Activated CD4-positive, alpha-beta memory T cell treated with anti-CD3 and anti-CD28 coated beads for 36 hours (primary cell): ENCODE measurements at regions of chrX and their contacts with region 1.

Region 1: DNA sequence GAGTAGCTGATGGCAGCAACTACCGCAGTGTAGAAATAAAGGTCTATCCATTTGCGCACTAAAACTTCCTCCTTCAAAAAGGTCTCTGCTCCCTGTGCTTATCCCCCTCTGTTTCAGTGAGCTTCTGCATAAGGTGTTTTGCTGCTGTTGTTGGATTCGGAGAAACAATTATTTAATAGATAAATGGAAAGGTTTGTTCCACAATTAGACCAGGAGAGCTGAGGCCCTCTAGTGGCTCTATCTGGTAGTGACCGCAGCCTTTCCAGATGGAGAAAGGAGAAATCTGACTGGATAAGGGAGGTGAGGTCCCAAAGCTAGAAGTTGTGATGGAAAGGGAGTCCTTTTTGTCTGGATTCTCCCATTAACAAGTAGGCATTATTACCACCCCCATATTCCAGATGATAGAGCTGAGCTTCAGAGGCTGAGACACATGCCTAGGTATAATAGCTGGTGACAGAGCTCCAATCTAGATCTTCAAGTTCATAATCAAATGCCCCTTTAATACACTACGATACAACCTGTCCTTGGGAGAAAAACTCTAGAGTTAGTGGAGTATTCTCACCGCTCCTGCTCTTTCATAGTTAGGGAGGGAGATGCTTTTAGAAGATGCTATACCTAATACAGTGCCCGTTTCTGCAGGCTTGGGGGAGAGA is 5.1 kb upstream of the GABRQ start:
- DNase-seq: peak; percentile 50
- H3K4me3 Mint-ChIP-seq: no peak overlapping the region
- H3K27ac Mint-ChIP-seq: no peak overlapping the region
- H3K4me1 Mint-ChIP-seq: no peaks in the 10 kb centered on the region
- H3K27me3 Mint-ChIP-seq: peaks cover 6% of the 10 kb centered on the region

Region 2: DNA sequence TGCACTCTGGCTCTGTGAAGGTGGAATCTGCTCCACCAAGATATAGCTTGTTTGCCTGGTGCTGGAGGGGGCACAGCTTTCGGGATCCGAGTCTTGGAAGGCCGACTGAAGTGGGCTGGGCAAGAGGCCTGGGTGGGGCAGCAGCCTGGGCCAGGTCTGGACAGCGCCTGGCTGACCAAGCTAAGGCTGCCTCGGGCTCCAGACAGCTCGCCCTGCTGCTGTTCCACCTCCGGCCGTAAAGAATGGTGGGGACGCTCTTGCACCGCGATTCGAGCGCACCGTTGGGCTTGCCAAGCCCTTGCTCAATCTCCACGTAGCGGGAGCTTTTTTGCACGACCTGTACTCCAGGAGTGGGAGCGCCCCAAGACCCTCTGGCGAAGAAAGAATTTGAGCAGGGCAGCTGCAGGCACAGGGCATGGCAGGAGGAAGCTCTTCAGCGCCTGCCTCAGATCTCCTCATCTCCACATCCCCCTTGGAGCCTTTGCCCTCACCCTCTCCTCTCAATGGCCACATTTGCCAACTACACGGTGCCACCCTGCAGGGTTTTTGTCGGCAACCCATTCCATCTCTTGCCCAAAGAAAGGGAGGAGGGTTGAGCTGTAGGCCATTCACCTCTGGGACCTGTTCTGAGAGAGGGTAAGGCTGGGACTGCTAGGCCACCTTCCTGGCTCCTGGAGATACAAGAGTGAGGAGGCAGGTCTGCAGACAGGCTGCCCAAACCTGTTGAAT is 879.1 kb before region 1 on chrX:
- CTCF ChIA-PET with region 1: interaction called, 5 read pairs
- POLR2A ChIA-PET with region 1: no interaction called
- intact Hi-C with region 1: loop called (anchors 5 kb)
- DNase-seq: peak; percentile 25
- H3K4me3 Mint-ChIP-seq: no peak overlapping the region
- H3K27ac Mint-ChIP-seq: no peak overlapping the region
- H3K4me1 Mint-ChIP-seq: no peaks in the 10 kb centered on the region
- H3K27me3 Mint-ChIP-seq: peaks cover 8% of the 10 kb centered on the region

Region 3: DNA sequence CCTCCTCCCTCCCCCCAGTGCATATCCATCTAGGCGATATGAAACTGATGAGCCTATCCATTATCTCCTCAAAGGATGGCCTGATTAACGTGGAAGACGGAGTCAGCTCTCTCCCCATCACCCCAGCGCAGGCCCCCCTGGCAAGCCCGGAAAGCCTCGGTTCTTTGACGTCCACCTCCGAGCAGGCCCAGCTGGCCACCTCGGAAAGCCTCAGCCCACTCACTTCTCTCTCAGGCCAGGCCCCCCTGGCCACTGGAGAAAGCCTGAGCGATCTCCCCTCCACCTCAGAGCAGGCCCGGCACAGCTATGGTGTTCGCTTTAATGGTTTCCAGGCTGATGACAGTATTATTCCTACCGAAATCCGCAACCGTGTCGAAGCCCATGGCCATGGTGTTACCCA is 19.9 kb after region 1 on chrX:
- CTCF ChIA-PET with region 1: no interaction called
- POLR2A ChIA-PET with region 1: no interaction called
- intact Hi-C with region 1: no loop called
- DNase-seq: no peak
- H3K4me3 Mint-ChIP-seq: no peak overlapping the region
- H3K27ac Mint-ChIP-seq: no peak overlapping the region
- H3K4me1 Mint-ChIP-seq: no peaks in the 10 kb centered on the region
- H3K27me3 Mint-ChIP-seq: peaks cover 1% of the 10 kb centered on the region

Region 4: DNA sequence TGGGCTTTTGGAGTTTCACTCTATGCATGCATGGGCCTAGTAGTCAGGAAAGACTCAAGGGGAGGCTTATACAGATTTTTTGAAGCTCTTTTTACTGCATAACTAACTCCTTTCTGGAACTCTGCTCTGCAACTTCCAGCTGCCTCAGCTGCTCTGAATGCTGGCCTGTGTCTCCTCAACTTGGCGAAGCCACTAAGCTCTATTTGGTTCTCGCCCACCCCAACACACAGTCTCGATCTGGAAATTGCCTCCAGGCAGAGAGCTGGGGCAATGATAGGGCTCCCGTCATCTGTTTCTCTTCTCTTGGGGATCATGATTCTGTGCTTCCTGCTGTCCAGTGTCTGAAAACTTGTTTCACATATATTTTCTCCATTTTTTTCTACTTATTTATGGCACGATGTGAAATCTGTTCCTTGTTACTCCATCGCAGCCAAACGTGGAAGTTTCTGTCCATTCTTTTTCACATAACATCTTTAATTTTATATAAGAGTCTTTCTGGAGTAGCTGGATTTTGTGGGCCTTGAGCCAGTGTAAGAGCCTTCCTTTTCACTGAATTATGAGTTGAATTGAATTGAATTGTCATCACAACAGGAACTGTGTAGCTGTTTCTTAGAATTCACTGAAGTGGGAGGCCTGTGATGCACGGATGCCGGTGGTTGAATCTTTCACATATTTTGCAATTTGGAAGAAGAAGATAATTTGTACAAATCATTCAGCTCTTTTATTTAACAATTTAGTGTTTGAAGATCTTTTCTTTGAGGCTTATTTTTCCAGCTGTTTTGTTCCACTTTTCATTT is 710.4 kb after region 1 on chrX:
- CTCF ChIA-PET with region 1: no interaction called
- POLR2A ChIA-PET with region 1: no interaction called
- intact Hi-C with region 1: no loop called
- DNase-seq: no peak
- H3K4me3 Mint-ChIP-seq: no peak overlapping the region
- H3K27ac Mint-ChIP-seq: peak overlapping the region; percentile 80
- H3K4me1 Mint-ChIP-seq: peaks cover 49% of the 10 kb centered on the region
- H3K27me3 Mint-ChIP-seq: no peaks in the 10 kb centered on the region